ENCODE measurements at regions of chr2 and their contacts with region 1.

Region 1: GRCh38 chr2:21042958-21043743 is 722 bp downstream of the APOB start:
- DNase-seq: peak; percentile 23 to 46 (median 31)
- H3K4me3 ChIP-seq: no peak overlapping the region
- H3K4me3 Mint-ChIP-seq: peak overlapping the region in 1 of 2 donors; percentile 33
- H3K27ac ChIP-seq: no peak overlapping the region
- H3K27ac Mint-ChIP-seq: no peak overlapping the region
- H3K4me1 ChIP-seq: no peaks in the 10 kb centered on the region
- H3K4me1 Mint-ChIP-seq: peaks cover 3% of the 10 kb centered on the region
- H3K27me3 ChIP-seq: peaks cover 4 to 21% of the 10 kb centered on the region in 2 donors
- H3K27me3 Mint-ChIP-seq: peaks cover 17 to 31% (median 28%) of the 10 kb centered on the region in 3 donors
- CTCF ChIP-seq: peak; percentile 97

Region 2: GRCh38 chr2:21083482-21083881 is 40.3 kb after region 1 on chr2:
- intact Hi-C with region 1: no loop called
- DNase-seq: no peak
- H3K4me3 ChIP-seq: no peak overlapping the region
- H3K4me3 Mint-ChIP-seq: no peak overlapping the region
- H3K27ac ChIP-seq: no peak overlapping the region
- H3K27ac Mint-ChIP-seq: no peak overlapping the region
- H3K4me1 ChIP-seq: no peaks in the 10 kb centered on the region
- H3K4me1 Mint-ChIP-seq: no peaks in the 10 kb centered on the region
- H3K27me3 ChIP-seq: no peaks in the 10 kb centered on the region
- H3K27me3 Mint-ChIP-seq: no peaks in the 10 kb centered on the region
- CTCF ChIP-seq: no peak

Region 3: GRCh38 chr2:21317131-21317530 is 274.0 kb after region 1 on chr2:
- intact Hi-C with region 1: loop called (anchors 2 to 5 kb)
- DNase-seq: peak; percentile 45 to 74 (median 63)
- H3K4me3 ChIP-seq: no peak overlapping the region
- H3K4me3 Mint-ChIP-seq: no peak overlapping the region
- H3K27ac ChIP-seq: no peak overlapping the region
- H3K27ac Mint-ChIP-seq: no peak overlapping the region
- H3K4me1 ChIP-seq: peaks cover 0 to 3% of the 10 kb centered on the region in 2 donors
- H3K4me1 Mint-ChIP-seq: peaks cover 6% of the 10 kb centered on the region
- H3K27me3 ChIP-seq: no peaks in the 10 kb centered on the region
- H3K27me3 Mint-ChIP-seq: no peaks in the 10 kb centered on the region
- CTCF ChIP-seq: peak; percentile 84

Region 4: DNA sequence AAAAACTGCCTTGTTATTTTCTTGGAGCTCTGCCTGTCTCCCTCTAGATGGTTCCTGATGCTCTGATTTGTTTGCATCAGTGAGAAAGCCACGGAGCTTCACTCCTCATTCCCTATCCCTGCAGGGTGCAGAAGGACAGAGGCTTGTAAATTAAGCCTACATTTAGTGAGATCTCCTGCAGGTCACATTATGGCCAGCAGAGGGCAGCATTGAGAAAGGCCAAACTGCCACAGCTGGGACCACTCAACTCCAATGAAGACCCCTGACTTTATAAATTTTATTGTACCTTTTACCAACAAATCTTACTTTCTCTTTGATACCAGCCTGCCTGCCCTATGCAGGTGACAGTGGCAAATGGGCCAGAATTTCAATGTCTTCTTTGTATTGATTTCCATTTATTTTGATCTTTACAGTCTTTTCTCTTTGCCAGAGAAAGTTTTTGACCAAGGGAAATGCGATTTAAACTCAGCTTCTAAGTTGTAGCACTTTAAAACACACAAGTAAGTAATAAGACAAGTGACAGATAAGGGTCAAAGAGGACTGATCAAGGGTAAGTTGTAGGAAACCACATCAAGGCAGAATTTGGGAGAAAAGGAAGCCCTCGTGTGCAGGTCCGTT is 1312.8 kb after region 1 on chr2:
- intact Hi-C with region 1: loop called in 1 of 2 experiments (anchors 10 kb)
- DNase-seq: peak; percentile 0 to 16 (median 8)
- H3K4me3 ChIP-seq: no peak overlapping the region
- H3K4me3 Mint-ChIP-seq: no peak overlapping the region
- H3K27ac ChIP-seq: no peak overlapping the region
- H3K27ac Mint-ChIP-seq: no peak overlapping the region
- H3K4me1 ChIP-seq: no peaks in the 10 kb centered on the region
- H3K4me1 Mint-ChIP-seq: no peaks in the 10 kb centered on the region
- H3K27me3 ChIP-seq: no peaks in the 10 kb centered on the region
- H3K27me3 Mint-ChIP-seq: peaks cover 0 to 2% (median 2%) of the 10 kb centered on the region in 3 donors
- CTCF ChIP-seq: peak; percentile 91

Measured in CD14-positive monocyte (primary cell).